Left cardiac atrium (tissue), 4 donors: ENCODE measurements at regions of chr6 and their contacts with region 1.

Region 1: DNA sequence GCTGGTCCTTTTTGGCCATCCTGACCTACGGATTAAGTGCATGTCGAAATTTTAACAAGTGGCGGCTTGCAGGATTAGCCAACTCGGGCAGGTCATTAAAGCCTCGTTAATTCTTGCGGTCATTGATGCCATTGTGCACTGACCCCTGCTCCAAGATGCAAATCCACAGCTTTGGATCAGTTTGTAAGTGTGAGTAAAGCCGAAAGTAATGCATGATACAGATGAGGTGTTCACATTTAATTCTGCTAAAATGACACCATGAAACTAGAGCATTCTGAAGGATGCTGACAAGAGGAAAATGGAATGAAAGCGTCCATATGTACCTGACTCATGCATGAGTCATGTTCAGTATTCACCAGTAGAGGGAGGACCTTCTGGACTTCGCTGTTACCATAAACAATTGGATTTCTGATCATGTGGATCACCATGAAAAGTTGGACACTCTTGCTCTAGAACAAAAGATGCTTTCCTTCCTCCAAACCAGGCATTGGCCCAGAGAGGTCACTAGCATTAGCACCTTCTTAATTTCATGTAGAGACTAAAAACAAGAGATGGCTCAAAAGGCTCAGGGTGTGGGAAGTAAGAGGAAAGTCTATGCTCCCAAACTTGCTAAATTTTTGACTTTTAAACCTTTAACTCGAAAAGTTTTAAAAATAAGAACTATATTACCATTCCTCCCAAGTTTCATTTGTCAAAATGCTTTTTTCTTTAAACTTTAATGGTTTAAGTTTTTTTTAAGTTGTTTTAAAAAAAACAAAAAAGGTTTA is 48.0 kb downstream of the MUC22 start:
- DNase-seq: no peak
- ATAC-seq: peak in 1 of 2 donors; percentile 54

Region 2: DNA sequence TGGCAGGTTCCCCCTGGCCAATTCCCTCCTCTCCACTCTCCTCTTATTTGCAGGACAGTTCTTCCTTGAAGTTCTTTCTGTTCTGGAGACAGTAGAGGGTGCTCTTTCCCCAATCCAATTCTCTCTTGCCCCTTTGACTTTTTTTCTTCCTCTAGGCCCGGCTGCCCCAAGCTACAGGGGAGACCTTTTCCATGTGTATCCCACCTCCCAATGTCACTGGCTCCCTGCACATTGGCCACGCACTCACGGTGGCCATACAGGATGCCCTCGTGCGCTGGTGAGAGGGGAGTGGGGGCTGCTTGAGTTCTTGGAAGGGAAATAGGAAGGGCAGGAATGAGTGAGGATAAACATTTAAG is 142.7 kb before region 1 on chr6:
- intact Hi-C with region 1: loop called in 1 of 2 experiments (anchors 5 kb)
- DNase-seq: no peak
- ATAC-seq: peak in 1 of 2 donors; percentile 48

Region 3: DNA sequence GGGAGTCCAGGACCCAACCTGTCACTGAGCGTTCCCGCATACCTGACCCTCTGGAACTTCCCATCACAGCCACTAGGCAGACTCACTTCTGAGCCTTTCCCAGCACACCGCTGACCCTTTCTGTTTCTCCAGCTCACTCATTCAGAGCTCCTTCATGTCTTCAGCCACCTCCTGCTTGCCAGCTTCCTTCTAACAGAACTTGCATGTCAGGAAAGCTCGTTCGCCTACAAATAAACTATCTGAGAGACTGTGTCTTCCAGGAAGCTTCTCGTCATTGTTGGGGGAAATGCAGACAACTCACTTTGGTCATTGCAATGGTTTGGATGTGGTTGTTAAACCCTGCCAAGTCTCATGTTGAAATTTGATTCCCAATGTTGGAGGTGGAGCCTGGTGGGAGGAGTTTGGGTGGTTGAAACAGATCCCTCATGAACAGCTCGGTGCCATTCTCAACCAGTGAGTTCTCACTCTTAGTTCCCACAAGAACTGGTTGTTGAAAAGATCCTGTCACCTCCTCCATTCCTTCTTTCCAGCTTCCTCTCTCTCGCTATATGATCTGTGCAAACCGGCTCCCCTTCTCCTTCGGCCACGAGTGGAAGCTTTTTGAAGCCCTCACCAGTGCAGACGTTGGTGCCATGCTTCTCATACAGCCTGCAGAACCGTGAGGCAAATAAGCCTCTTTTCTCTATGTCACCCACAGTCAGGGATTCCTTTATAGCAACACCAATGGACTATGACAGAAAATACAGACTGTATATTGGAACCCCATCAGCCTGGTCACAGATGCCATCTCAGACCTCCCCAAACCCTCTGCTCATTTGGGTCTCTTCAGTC is 76.2 kb before region 1 on chr6:
- intact Hi-C with region 1: loop called in 1 of 2 experiments (anchors 10 kb)
- DNase-seq: peak; percentile 48
- ATAC-seq: peak; percentile 86 to 93